Naive thymus-derived CD8-positive, alpha-beta T cell (primary cell): ENCODE measurements at regions of chr5 and their contacts with region 1.

Region 1: DNA sequence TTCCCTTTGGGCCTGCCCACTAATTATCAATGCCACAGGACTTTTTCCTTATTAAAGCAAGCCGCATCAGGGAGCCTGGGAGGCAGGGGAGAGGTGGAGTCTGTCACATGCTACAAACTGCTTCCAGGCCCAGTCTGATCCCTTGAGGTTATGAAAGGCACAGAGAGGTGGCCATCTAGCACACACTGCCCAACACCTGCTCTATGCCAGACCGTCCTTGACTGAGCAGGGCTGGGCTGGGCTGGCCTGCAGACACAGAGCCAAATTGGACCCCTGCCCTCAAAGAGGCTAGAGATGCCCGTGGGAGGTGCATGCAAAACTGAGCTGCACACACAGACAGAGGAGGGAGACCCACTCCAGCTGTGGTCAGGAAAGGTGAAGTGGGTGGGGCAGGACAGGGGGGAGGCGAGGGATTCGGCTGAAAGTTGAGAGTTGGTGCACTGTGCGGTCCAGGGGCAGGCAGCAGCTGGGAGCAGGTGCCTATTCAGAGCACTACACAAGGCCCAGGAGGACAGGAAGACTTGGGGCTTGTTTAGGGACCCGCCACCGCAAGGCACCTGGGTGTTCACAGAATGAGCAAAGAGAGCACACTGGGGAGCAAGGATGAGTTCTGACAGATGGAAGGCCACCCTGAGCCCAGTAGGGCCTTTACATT is 36.4 kb upstream of the TCF7 start:
- DNase-seq: peak in 1 of 10 donors; percentile 33
- ATAC-seq: peak; percentile 37 to 50
- H3K4me3 Mint-ChIP-seq: peak overlapping the region; percentile 19 to 85 (median 70)
- H3K27ac Mint-ChIP-seq: peak overlapping the region; percentile 91 to 99 (median 95)
- H3K4me1 Mint-ChIP-seq: peaks cover 34 to 80% (median 72%) of the 10 kb centered on the region in 4 donors
- H3K27me3 Mint-ChIP-seq: no peaks in the 10 kb centered on the region

Region 2: DNA sequence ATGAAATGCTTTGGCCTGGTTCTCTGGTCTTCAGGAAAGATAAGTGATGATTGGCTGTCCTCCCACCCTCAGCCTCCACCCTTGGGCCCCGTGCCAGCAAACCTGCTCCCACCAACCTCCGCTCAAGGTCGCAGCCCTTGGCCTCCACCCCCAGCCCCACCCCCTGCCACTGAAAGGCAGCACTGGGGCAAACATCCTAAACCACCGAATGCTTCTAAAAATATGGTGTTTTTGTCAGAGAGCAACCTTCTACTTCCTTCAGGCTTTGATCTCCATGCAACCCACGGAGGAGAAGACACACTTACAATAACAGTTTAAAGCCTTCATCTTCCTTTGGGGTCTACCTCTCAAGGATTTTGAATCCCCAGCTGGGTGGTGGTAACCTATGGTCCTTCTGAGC is 12.5 kb after region 1 on chr5:
- POLR2A ChIA-PET with region 1: interaction called, 31 read pairs
- DNase-seq: peak; percentile 60 to 91 (median 74)
- ATAC-seq: peak; percentile 46 to 59
- H3K4me3 Mint-ChIP-seq: peak overlapping the region; percentile 61 to 85 (median 74)
- H3K27ac Mint-ChIP-seq: peak overlapping the region; percentile 92 to 99 (median 96)
- H3K4me1 Mint-ChIP-seq: peaks cover 50 to 91% (median 88%) of the 10 kb centered on the region in 4 donors
- H3K27me3 Mint-ChIP-seq: no peaks in the 10 kb centered on the region